Activated CD4-positive, alpha-beta memory T cell treated with anti-CD3 and anti-CD28 coated beads, Interleukin-2, amount 10 ng/mL, durations not matched to agents 7 days and 5 days (primary cell): ENCODE measurements at regions of chr2 and their contacts with region 1.

Region 1: GRCh38 chr2:118032169-118033013 is 18.5 kb upstream of the CCDC93 start:
- DNase-seq: peak; percentile 44
- H3K4me3 Mint-ChIP-seq: no peak overlapping the region
- H3K27ac Mint-ChIP-seq: no peak overlapping the region
- H3K4me1 Mint-ChIP-seq: no peaks in the 10 kb centered on the region
- H3K27me3 Mint-ChIP-seq: peaks cover 55% of the 10 kb centered on the region

Region 2: GRCh38 chr2:118021361-118021760 is 11.0 kb before region 1 on chr2:
- CTCF ChIA-PET with region 1: interaction called, 15 read pairs
- POLR2A ChIA-PET with region 1: interaction called, 3 read pairs
- DNase-seq: no peak
- H3K4me3 Mint-ChIP-seq: no peak overlapping the region
- H3K27ac Mint-ChIP-seq: no peak overlapping the region
- H3K4me1 Mint-ChIP-seq: peaks cover 12% of the 10 kb centered on the region
- H3K27me3 Mint-ChIP-seq: peaks cover 16% of the 10 kb centered on the region

Region 3: DNA sequence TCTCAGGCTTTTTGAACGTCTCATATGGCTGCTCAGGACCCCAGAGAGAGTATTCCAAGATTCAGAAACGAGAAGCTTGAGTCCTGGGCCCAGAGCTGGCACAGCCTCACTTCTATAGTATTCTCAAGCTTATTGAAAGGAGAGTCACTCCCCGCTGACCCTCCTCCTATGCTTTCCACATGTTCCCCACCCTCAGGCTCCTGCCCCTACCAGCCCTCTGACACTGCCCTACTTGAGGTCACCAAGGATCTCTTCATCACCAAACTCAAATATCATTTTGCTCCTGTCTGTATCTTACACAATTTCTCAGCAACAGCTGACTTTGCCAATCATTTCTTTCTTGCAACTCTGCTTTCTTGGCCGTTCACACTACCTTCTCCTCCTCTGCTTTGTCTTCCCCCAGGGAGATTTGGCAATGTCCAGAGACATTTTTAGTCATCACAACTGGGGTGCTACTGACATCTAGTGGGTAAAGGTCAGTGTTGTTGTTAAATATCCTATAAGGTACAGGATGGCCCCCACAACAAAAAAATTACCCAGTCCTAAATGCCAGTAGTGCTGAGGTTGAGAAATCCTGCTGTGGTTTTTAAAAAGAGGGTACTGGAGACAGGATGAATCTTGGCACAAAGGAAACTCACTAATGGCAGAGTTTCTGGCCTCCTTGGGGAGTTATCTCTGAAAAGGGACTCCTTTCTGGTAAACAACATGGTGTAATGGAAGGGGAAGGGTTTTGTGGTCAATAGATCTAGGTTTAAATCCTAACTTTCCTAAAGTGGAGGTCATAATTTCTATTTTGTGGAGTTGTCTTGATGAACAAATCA is 29.0 kb after region 1 on chr2:
- CTCF ChIA-PET with region 1: interaction called, 13 read pairs
- POLR2A ChIA-PET with region 1: no interaction called
- DNase-seq: no peak
- H3K4me3 Mint-ChIP-seq: no peak overlapping the region
- H3K27ac Mint-ChIP-seq: no peak overlapping the region
- H3K4me1 Mint-ChIP-seq: peaks cover 10% of the 10 kb centered on the region
- H3K27me3 Mint-ChIP-seq: peaks cover 22% of the 10 kb centered on the region